ENCODE measurements at regions of chr21 and their contacts with region 1.

Region 1: DNA sequence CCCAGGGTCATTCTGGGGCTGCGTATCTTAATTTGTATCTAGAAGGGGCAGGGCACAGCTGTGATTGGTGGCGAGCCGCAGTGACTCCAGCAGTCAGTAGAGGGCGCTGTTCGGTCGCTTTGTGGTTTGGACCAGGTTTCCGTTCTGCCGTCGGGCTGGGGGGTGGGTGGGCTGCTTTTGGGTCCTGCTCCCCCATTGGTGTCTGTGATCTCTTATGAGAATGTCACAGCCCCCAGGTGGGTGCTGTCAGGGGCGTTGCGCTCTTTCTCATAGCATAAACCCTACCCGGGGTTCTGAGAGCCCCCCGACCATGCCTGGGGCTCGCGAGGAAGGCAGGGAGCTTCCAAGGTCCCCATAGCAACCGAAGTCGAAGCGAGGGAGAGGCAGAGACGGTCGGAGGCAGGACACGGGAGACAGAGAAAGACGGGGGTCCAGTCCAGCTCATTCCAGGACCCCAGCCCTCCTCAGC is 5.4 kb downstream of the TFF3 start:
- DNase-seq: peak in 1 of 2 experiments; percentile 96
- H3K4me3 ChIP-seq: peak overlapping the region in 3 of 4 experiments; percentile 28 to 54 (median 30); a peak in 4 of 8 replicates
- H3K27ac ChIP-seq: no peak overlapping the region
- H3K4me1 ChIP-seq: peaks cover 4 to 14% (median 6%) of the 10 kb centered on the region in 4 experiments
- H3K27me3 ChIP-seq: peaks cover 0 to 7% (median 3%) of the 10 kb centered on the region in 4 experiments; a peak in 2 of 7 replicates
- CTCF ChIP-seq: peak in 2 of 3 experiments; percentile 85 to 88; a peak in 3 of 4 replicates
- EP300 ChIP-seq: no peak
- POLR2A ChIP-seq: no peak
- RAD21 ChIP-seq: peak; percentile 77 to 86

Region 2: GRCh38 chr21:42238185-42238934 is 71.4 kb before region 1 on chr21:
- CTCF ChIA-PET with region 1: interaction called, 10 read pairs
- POLR2A ChIA-PET with region 1: no interaction called
- DNase-seq: no peak
- H3K4me3 ChIP-seq: no peak overlapping the region
- H3K27ac ChIP-seq: no peak overlapping the region
- H3K4me1 ChIP-seq: peaks cover 7 to 21% (median 13%) of the 10 kb centered on the region in 4 experiments
- H3K27me3 ChIP-seq: peaks cover 0 to 24% (median 20%) of the 10 kb centered on the region in 4 experiments; a peak in 5 of 7 replicates
- CTCF ChIP-seq: no peak
- EP300 ChIP-seq: no peak
- POLR2A ChIP-seq: no peak
- RAD21 ChIP-seq: no peak

Region 3: DNA sequence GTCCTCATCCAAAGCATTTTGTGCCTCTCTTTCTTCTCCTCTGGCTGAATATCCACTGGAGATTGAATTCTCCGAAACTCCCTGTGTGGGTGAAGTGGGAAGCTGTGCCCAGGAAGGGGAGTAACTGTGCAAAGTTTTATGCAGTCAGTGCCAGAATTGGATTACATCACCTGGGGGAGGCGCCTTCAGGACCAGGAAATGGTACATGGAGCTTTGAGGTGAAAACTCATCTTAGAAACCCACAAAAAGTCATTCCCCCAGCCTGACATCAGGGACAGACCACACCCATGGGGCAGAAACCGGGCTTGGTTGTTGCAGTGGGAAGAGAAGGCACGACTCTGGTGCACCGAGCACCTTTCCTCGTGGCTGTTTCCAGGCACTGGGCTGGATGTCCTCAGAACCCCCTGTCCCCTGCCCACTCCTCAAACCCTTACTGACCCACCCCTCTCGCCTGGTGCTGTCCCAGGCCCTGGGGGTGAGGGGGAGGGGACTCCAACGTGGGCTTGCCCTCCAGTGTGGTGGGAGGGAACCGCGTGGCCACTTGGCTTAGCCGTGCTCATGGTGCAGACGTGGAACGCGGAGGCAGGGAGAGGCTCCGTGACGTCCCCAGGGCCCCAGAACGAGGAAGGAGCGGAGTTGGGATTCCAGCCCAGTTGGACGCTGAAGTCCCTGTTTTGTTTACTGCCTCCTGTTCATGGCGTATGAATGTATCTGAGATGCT is 10.3 kb before region 1 on chr21:
- CTCF ChIA-PET with region 1: interaction called, 36 read pairs
- POLR2A ChIA-PET with region 1: no interaction called
- DNase-seq: no peak
- H3K4me3 ChIP-seq: no peak overlapping the region
- H3K27ac ChIP-seq: no peak overlapping the region
- H3K4me1 ChIP-seq: no peaks in the 10 kb centered on the region
- H3K27me3 ChIP-seq: no peaks in the 10 kb centered on the region
- CTCF ChIP-seq: no peak
- EP300 ChIP-seq: no peak
- POLR2A ChIP-seq: no peak
- RAD21 ChIP-seq: no peak

Region 4: DNA sequence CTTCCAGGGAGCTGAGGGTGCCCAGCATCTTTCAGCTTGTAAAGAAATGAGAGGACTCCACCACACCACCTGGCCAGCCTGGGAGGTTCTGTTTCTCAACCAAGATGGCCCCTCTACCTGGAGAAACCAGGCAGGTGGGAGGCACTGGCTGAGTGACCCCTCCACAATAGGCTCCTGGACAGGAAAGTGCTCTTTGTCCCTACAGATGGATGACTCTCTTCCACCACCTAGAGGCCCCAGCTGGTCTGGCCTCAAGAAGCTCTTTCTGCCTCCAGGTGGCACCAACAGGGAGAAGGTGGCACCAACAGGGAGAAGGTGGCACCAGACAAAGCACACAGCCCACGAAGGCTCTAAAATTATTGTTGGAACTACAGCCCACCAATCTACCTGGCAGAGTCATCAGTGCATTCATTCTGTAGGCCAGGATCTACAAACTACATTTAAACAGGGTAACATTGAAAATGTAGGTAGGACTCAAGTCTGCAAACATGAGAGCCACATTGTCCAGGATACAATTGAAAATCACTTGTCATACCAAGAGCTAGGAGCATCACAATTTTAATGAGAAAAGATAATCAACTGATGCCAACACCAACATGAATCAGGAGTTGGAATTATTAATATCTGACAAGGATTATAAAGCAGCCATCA is 71.7 kb after region 1 on chr21:
- CTCF ChIA-PET with region 1: interaction called, 29 read pairs
- POLR2A ChIA-PET with region 1: no interaction called
- DNase-seq: no peak
- H3K4me3 ChIP-seq: no peak overlapping the region
- H3K27ac ChIP-seq: no peak overlapping the region
- H3K4me1 ChIP-seq: no peaks in the 10 kb centered on the region
- H3K27me3 ChIP-seq: no peaks in the 10 kb centered on the region; a peak in 1 of 7 replicates
- CTCF ChIP-seq: peak; percentile 73 to 99 (median 87)
- EP300 ChIP-seq: no peak
- POLR2A ChIP-seq: no peak
- RAD21 ChIP-seq: peak; percentile 78 to 84

Region 5: GRCh38 chr21:42537106-42537742 is 227.4 kb after region 1 on chr21:
- CTCF ChIA-PET with region 1: no interaction called
- POLR2A ChIA-PET with region 1: no interaction called
- DNase-seq: no peak
- H3K4me3 ChIP-seq: no peak overlapping the region
- H3K27ac ChIP-seq: no peak overlapping the region
- H3K4me1 ChIP-seq: peaks cover 0 to 3% (median 0%) of the 10 kb centered on the region in 4 experiments; a peak in 1 of 7 replicates
- H3K27me3 ChIP-seq: no peaks in the 10 kb centered on the region
- CTCF ChIP-seq: peak; percentile 4 to 54 (median 36)
- EP300 ChIP-seq: no peak
- POLR2A ChIP-seq: no peak
- RAD21 ChIP-seq: peak; percentile 58 to 71

Region 6: GRCh38 chr21:42806509-42807140 is 496.8 kb after region 1 on chr21:
- CTCF ChIA-PET with region 1: no interaction called
- POLR2A ChIA-PET with region 1: no interaction called
- DNase-seq: peak in 1 of 2 experiments; percentile 51
- H3K4me3 ChIP-seq: no peak overlapping the region
- H3K27ac ChIP-seq: no peak overlapping the region
- H3K4me1 ChIP-seq: peaks cover 0 to 14% (median 4%) of the 10 kb centered on the region in 4 experiments; a peak in 5 of 7 replicates
- H3K27me3 ChIP-seq: no peaks in the 10 kb centered on the region
- CTCF ChIP-seq: no peak
- EP300 ChIP-seq: no peak
- POLR2A ChIP-seq: no peak
- RAD21 ChIP-seq: no peak

Measured in H1 (cell line).